ENCODE measurements at regions of chr2 and their contacts with region 1.

Region 1: DNA sequence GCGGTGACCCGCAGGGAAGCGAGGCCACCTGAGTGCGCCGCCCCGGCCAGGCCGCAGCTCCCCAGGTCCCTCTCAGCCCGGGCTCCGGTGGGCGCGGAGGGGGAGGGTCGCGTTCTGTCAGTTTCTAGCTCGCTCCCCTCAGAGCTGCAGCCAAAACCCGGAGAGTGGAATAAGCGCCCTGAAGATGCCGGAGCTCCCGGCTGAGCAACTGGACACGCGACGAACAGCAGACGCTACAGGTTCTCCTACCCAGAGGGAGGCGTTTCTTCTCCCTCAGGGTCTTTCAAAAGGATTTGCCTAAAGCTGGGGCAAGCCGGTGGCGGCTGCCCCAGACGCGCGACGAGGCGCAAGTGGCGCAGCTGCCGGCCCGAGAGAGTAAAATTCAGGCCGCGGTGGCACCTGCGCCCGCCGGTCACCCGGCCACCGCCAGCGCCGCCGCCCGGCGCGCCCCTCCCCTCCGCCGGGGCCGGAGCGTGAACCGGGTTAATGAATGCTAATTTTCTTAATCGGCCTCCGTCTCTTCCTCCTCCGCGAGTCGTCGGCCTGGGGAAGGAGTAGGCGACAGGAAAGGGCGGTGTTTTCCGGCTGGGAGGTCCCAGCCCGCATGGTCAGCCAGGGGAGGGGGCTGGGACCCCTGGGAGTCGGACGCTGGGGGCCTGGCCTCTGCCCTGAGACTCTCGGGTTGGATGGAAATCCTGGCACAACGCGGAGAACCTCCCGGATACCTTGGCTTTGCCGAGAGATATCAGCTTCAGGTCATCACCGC is 845 bp upstream of the CDC42EP3 start:
- DNase-seq: peak; percentile 65
- H3K4me3 Mint-ChIP-seq: peak overlapping the region; percentile 75
- H3K27ac Mint-ChIP-seq: peak overlapping the region; percentile 65
- H3K4me1 Mint-ChIP-seq: peaks cover 32% of the 10 kb centered on the region
- H3K27me3 Mint-ChIP-seq: peaks cover 2% of the 10 kb centered on the region

Region 2: DNA sequence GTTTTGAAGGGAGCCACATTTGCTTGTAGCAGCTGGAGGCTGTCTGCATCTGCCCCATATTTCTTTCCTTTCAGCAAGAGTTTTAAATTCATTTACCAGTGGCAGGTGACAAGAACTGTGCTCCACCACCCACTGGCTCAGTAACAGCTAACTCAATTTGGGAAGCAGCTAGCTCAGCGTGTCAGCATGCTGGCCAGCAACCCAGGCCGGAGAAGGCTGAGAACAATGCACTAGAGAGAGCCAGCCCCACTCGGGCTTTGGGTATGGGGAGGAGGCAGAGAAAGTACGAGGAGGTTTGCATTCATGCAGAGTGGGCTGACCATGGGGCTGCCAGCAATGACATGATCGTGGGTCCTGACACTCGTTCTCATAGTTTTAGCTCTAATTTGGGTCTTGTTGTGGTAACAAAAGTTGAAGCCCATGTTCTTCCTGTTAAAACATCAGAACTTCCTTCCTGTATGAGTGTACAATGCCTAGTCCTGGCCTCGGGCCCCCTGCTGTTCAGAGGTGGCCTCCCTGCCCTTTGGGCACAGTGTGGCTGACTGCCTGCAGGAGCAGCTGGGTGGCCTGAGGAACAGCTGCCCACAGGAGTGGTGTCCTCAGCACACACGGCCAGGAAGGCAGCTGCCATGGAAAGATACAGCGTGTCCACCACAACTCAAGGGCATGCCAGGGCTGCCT is 23.8 kb before region 1 on chr2:
- intact Hi-C with region 1: loop called (anchors 2 kb)
- DNase-seq: no peak
- H3K4me3 Mint-ChIP-seq: no peak overlapping the region
- H3K27ac Mint-ChIP-seq: peak overlapping the region; percentile 38
- H3K4me1 Mint-ChIP-seq: peaks cover 51% of the 10 kb centered on the region
- H3K27me3 Mint-ChIP-seq: no peaks in the 10 kb centered on the region

Region 3: DNA sequence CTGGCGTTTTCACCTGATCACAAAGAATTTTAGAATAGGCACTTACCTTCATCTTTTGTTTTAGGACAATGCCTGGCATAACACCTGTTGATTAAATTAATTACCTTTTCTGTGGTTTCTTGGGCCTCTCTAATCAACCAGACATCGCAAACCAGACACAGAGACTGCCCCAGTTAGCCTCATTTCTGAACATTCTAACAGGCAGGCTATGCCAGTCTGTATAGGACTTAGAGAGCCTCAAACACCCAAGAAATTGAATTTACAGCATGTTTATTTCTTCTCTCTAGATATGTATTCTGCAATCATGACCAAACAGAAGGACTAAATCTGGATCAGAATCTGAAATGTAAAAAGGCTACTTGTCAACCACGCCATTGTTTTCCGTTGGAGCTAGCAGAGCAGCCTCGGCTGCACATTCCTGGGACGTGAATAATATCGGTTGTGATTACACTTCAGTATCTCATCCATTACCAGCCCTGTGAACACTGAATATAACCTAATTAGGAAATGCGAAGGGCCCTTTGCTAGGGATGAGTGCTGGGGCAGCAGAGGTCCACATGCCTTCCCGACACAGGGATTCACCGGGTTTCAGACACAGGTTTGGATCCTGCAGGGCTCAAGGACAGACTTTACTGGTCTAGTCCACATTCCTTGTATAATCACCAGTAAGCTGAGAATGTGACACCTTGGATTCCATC is 16.6 kb after region 1 on chr2:
- intact Hi-C with region 1: loop called (anchors 2 kb)
- DNase-seq: no peak
- H3K4me3 Mint-ChIP-seq: no peak overlapping the region
- H3K27ac Mint-ChIP-seq: no peak overlapping the region
- H3K4me1 Mint-ChIP-seq: peaks cover 14% of the 10 kb centered on the region
- H3K27me3 Mint-ChIP-seq: peaks cover 12% of the 10 kb centered on the region

Region 4: DNA sequence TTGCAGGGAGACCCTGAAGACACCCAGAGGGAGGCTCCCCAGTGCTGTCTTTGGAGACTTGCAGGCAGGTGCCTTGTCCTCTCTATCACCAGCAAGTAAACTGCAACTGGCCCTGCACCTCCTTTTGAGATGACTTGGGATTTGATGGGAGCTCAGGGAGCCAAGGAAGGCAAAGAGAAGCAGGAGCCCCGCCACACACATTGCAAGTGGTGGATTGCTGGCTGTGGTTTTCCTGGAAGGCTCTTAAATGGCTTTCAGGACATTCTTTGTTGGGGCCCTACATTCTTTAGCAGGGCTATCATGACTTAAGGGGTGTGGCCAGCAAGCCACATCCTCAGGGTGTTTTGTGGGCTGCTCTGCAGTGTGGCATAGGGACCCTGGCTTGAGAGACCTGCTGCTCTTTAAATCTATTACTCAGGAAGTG is 39.0 kb after region 1 on chr2:
- intact Hi-C with region 1: loop called (anchors 5 kb)
- DNase-seq: peak; percentile 46
- H3K4me3 Mint-ChIP-seq: no peak overlapping the region
- H3K27ac Mint-ChIP-seq: no peak overlapping the region
- H3K4me1 Mint-ChIP-seq: peaks cover 49% of the 10 kb centered on the region
- H3K27me3 Mint-ChIP-seq: peaks cover under 1% of the 10 kb centered on the region

Region 5: DNA sequence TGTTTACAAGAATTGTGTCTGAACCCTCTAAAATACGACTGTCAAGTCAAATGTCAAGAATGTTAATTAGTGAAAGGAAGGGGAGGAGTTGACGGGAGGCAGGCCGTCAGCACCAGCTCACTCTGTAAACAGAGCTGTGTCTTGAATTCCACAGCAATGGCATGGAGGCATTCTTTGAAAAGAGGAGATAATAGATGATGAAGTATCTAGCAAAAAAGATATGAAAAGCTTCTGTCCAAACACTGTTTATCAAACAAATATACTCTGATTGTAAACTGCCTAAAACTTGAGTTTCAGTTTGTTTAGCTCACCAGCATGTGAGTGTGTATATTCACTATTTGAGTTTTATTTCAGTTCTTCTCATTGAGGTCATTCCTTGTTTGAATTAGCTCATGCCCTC is 93.8 kb after region 1 on chr2:
- intact Hi-C with region 1: no loop called
- DNase-seq: no peak
- H3K4me3 Mint-ChIP-seq: no peak overlapping the region
- H3K27ac Mint-ChIP-seq: no peak overlapping the region
- H3K4me1 Mint-ChIP-seq: peaks cover 6% of the 10 kb centered on the region
- H3K27me3 Mint-ChIP-seq: peaks cover 7% of the 10 kb centered on the region

Region 6: DNA sequence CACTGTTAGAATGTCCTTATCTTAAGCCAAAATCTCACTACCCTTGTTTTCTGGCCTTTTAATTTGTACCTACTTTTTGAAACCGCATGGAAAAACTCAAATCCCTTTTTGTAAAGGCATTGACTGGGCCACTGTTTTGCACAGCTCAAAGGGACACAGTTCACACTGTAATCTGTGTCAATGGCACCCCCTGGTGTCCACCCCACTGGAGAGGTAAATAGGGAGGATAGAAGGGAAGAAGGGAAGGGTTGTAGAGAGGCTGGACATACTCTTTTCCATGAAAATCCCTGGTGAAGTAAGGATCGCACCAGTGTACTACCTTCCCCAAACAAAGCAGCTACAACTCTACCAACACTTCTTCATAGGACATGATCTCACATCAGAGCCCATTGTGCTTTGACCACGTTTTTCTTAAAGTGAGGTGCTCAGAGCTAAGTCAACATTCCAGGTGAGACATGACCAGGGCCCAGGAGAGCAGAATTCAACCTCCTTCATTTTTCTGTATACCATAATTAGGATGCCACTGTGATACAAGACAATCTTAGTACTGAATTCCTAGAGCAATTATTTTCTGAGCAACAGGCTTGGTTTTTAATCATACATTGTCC is 160.4 kb after region 1 on chr2:
- intact Hi-C with region 1: loop called (anchors 5 kb)
- DNase-seq: peak; percentile 55
- H3K4me3 Mint-ChIP-seq: no peak overlapping the region
- H3K27ac Mint-ChIP-seq: no peak overlapping the region
- H3K4me1 Mint-ChIP-seq: peaks cover 21% of the 10 kb centered on the region
- H3K27me3 Mint-ChIP-seq: peaks cover 1% of the 10 kb centered on the region

Region 7: GRCh38 chr2:37843556-37843955 is 171.3 kb after region 1 on chr2:
- intact Hi-C with region 1: no loop called
- DNase-seq: no peak
- H3K4me3 Mint-ChIP-seq: no peak overlapping the region
- H3K27ac Mint-ChIP-seq: no peak overlapping the region
- H3K4me1 Mint-ChIP-seq: no peaks in the 10 kb centered on the region
- H3K27me3 Mint-ChIP-seq: peaks cover 22% of the 10 kb centered on the region

Region 8: DNA sequence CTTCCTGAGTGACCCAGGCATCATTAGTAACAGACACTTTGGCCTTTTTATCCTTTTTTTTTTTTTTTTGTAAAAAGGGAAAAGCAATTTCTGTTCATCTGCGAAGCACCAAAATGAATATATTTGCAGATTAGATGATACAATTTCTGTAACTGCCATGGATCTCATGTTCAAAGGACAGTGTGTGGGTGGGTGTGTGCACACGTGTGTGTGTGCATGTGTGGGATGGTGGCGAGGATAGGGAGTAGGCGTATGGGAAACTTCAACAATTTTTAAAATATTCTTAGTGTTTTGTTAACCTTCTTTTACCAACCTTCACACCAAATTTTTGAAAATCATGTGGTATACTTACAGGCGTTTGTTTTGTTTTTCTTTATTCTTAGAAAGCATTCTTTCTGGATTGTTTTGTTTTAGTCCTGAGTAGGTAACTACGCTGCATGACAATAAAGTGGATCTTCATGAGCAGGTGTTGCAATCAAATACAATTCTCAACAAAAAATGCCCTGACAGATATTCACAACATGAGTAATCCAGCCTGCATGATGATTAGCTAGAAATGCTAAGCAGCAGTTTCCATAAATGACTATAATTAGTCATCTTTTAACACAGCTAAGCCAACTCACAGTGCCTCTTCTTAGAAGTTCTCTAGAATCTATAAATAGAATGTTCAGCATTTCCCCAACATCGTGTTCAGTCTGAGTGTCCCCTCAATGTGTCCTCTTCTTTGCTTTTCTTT is 199.3 kb after region 1 on chr2:
- intact Hi-C with region 1: loop called (anchors 5 kb)
- DNase-seq: no peak
- H3K4me3 Mint-ChIP-seq: peak overlapping the region; percentile 10
- H3K27ac Mint-ChIP-seq: peak overlapping the region; percentile 86
- H3K4me1 Mint-ChIP-seq: peaks cover 34% of the 10 kb centered on the region
- H3K27me3 Mint-ChIP-seq: peaks cover 2% of the 10 kb centered on the region